Endothelial cell of umbilical vein (primary cell): ENCODE measurements at regions of chr15 and their contacts with region 1.

Region 1: GRCh38 chr15:49421991-49422390 is 1.1 kb upstream of the FGF7 start:
- DNase-seq: peak; percentile 65
- H3K4me3 ChIP-seq: peak overlapping the region in 1 of 3 experiments; percentile 9
- H3K27ac ChIP-seq: no peak overlapping the region
- H3K4me1 ChIP-seq: peaks cover 2% of the 10 kb centered on the region
- H3K27me3 ChIP-seq: peaks cover 0 to 3% of the 10 kb centered on the region in 2 experiments
- CTCF ChIP-seq: peak; percentile 58 to 78
- POLR2A ChIP-seq: no peak

Region 2: GRCh38 chr15:49023354-49023753 is 398.6 kb before region 1 on chr15:
- CTCF ChIA-PET with region 1: no interaction called
- POLR2A ChIA-PET with region 1: no interaction called
- dilution Hi-C with region 1: no loop called
- intact Hi-C with region 1: no loop called
- DNase-seq: no peak
- H3K4me3 ChIP-seq: no peak overlapping the region
- H3K27ac ChIP-seq: no peak overlapping the region
- H3K4me1 ChIP-seq: no peaks in the 10 kb centered on the region
- H3K27me3 ChIP-seq: no peaks in the 10 kb centered on the region
- CTCF ChIP-seq: no peak
- POLR2A ChIP-seq: no peak

Region 3: GRCh38 chr15:49242820-49243219 is 179.2 kb before region 1 on chr15:
- CTCF ChIA-PET with region 1: interaction called, 282 read pairs
- POLR2A ChIA-PET with region 1: no interaction called
- dilution Hi-C with region 1: no loop called
- intact Hi-C with region 1: no loop called
- DNase-seq: no peak
- H3K4me3 ChIP-seq: no peak overlapping the region
- H3K27ac ChIP-seq: no peak overlapping the region
- H3K4me1 ChIP-seq: no peaks in the 10 kb centered on the region
- H3K27me3 ChIP-seq: no peaks in the 10 kb centered on the region
- CTCF ChIP-seq: no peak
- POLR2A ChIP-seq: no peak

Region 4: DNA sequence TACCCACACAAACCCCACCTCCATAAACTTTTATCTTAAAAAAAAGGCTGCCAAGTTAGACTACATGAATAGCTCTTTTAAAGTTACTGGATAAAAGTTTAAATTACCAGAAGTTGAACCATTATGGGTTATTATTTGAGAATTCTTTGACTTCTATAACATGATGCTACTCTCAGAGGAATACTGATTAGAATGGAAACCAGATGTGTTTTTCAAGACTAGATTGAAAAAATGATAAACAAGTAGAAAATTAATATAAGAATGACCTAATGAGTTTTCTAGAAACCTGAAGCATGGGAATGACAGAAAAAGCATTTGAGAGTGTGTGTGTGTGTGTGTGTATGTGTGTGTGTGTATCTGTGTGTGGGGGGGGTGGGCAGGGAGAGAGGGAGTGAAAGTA is 11.3 kb before region 1 on chr15:
- CTCF ChIA-PET with region 1: interaction called, 24 read pairs
- POLR2A ChIA-PET with region 1: no interaction called
- dilution Hi-C with region 1: no loop called
- intact Hi-C with region 1: no loop called
- DNase-seq: no peak
- H3K4me3 ChIP-seq: no peak overlapping the region
- H3K27ac ChIP-seq: no peak overlapping the region
- H3K4me1 ChIP-seq: peaks cover under 1% of the 10 kb centered on the region
- H3K27me3 ChIP-seq: peaks cover 0 to 3% of the 10 kb centered on the region in 2 experiments
- CTCF ChIP-seq: no peak
- POLR2A ChIP-seq: no peak

Region 5: GRCh38 chr15:50003786-50004334 is 581.9 kb after region 1 on chr15:
- CTCF ChIA-PET with region 1: interaction called, 12 read pairs
- POLR2A ChIA-PET with region 1: no interaction called
- dilution Hi-C with region 1: no loop called
- intact Hi-C with region 1: loop called (anchors 1 kb)
- DNase-seq: peak; percentile 63
- H3K4me3 ChIP-seq: no peak overlapping the region
- H3K27ac ChIP-seq: no peak overlapping the region
- H3K4me1 ChIP-seq: no peaks in the 10 kb centered on the region
- H3K27me3 ChIP-seq: peaks cover 0 to 28% of the 10 kb centered on the region in 2 experiments
- CTCF ChIP-seq: peak; percentile 74 to 75
- POLR2A ChIP-seq: no peak